Endothelial cell of umbilical vein (primary cell): ENCODE measurements at regions of chr5 and their contacts with region 1.

Region 1: DNA sequence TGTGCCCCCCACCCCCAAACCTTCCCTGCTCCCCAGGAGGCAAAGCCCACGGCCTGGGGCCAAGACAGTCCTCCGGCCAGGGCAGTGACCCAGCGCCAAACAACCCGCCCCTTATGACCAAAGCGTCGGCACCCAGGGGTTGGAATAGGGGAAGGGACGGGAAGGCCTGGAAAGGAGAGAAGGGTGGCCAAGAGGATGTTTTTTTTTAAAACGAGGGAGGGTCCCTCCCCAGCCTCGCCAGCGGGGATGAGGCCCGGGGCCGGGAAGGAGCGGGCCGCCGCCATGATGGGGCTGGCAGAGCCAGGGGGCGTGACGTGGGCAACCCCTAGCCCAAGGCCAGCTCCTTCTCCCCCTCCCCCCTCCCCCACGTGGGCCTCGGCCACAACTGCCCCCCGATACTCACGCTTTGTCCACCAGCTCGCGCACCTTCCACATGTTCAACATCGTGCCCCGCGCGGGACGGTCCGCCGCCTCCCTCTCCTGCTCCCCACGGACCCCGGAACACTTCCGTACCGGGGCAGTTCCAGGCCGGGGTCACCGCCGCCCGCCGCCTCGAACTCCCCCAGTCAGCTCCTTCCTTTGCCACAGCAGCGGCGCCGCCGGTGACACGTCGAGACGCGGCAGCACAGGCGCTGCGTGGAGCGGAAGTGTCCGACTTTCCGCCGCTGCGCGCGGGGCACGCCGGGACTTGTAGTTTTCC is at the start of gene CLINT1:
- DNase-seq: peak; percentile 86
- H3K4me3 ChIP-seq: peak within 1 kb of the TSS; percentile 68 to 95 (median 93)
- H3K27ac ChIP-seq: peak within 1 kb of the TSS; percentile 81
- H3K4me1 ChIP-seq: peaks cover 14% of the 10 kb centered on the region
- H3K27me3 ChIP-seq: no peaks in the 10 kb centered on the region
- CTCF ChIP-seq: no peak
- POLR2A ChIP-seq: peak; percentile 74
- total RNA-seq, gene CLINT1: 76.6 and 79.6 TPM in 2 replicates

Region 2: GRCh38 chr5:157820593-157821252 is 38.0 kb before region 1 on chr5:
- CTCF ChIA-PET with region 1: interaction called, 14 read pairs
- POLR2A ChIA-PET with region 1: no interaction called
- dilution Hi-C with region 1: no loop called
- intact Hi-C with region 1: loop called (anchors 1 kb)
- DNase-seq: peak; percentile 80
- H3K4me3 ChIP-seq: no peak overlapping the region
- H3K27ac ChIP-seq: no peak overlapping the region
- H3K4me1 ChIP-seq: peaks cover 14% of the 10 kb centered on the region
- H3K27me3 ChIP-seq: no peaks in the 10 kb centered on the region
- CTCF ChIP-seq: peak; percentile 36 to 39
- POLR2A ChIP-seq: no peak

Region 3: GRCh38 chr5:157845894-157846598 is 12.6 kb before region 1 on chr5:
- CTCF ChIA-PET with region 1: interaction called, 11 read pairs
- POLR2A ChIA-PET with region 1: interaction called, 4 read pairs
- dilution Hi-C with region 1: no loop called
- intact Hi-C with region 1: no loop called
- DNase-seq: no peak
- H3K4me3 ChIP-seq: no peak overlapping the region
- H3K27ac ChIP-seq: no peak overlapping the region
- H3K4me1 ChIP-seq: no peaks in the 10 kb centered on the region
- H3K27me3 ChIP-seq: no peaks in the 10 kb centered on the region
- CTCF ChIP-seq: no peak
- POLR2A ChIP-seq: no peak

Region 4: DNA sequence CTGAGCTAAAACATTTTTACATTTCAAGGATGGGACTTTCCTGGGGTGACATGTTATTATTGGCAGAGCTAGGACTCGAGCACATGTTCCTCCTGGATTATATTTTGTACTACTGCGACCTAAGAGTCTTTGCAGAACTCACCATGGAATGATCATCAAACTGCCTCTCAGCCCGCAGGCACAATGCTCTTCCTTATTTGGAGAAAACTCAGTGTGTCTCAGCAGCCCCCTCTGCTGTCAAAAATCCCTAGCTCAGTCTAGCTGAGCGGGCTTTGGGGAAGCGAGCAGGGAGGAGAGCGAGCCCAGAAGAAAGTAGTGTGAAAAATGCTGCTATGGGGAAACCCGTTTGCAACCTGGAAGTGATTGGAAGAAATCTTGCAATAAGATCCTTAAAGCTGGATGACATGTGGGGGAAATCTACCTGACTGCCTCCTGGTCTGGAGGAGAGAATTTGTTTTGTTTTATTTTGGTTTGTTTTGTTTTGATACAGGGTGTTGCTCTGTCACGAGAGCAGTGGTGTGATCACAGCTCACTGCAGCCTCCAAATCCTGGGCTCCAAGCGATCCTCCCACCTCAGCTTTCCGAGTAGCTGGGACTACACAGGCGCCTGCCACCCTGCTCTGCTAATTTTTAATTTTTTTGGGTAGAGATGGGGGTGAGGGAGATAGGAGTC is 90.2 kb after region 1 on chr5:
- CTCF ChIA-PET with region 1: interaction called, 60 read pairs
- POLR2A ChIA-PET with region 1: interaction called, 3 read pairs
- dilution Hi-C with region 1: no loop called
- intact Hi-C with region 1: loop called (anchors 1 kb)
- DNase-seq: peak; percentile 90
- H3K4me3 ChIP-seq: no peak overlapping the region
- H3K27ac ChIP-seq: no peak overlapping the region
- H3K4me1 ChIP-seq: no peaks in the 10 kb centered on the region
- H3K27me3 ChIP-seq: peaks cover 0 to 4% of the 10 kb centered on the region in 2 experiments
- CTCF ChIP-seq: peak; percentile 83 to 84
- POLR2A ChIP-seq: no peak

Region 5: DNA sequence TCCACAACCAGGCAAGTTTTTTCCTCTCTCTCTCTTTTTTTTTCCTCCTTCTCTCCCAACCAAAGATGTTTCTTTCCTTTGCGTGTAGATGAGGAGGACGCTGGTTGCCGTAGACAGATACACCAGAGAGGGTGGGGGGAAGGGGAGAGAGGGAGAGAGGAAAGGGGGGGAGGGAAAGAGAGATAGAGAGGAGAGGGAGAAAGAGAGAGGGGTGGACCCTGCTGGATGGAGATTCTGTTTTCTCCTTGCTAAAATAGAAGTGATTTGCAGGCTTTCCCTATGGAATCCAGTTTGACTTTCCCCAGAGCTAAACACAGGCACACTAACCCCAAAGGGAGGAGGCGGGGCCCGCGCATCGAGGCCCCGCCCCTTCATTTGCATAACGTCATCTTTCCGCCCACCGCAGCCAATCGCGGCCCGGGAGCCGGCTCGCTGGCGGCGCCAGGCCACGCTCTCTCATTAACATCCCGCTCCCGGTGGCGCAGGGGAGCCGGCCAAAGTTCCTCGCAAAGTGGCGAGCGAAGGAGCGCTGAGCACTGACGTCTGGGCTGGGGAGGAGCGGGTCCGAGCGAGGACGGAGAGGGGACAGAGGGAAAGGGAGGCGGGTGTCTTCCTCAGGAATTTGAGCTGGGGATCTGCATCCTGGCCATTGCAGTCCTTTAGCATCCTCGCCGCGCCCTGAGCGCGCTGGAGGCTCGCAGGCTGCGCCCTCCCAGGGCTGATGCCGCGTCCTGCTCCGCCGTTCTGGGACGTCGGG is 1241.5 kb after region 1 on chr5:
- CTCF ChIA-PET with region 1: no interaction called
- POLR2A ChIA-PET with region 1: no interaction called
- dilution Hi-C with region 1: no loop called
- intact Hi-C with region 1: loop called (anchors 1 kb)
- DNase-seq: peak; percentile 87
- H3K4me3 ChIP-seq: peak overlapping the region; percentile 26 to 67 (median 38)
- H3K27ac ChIP-seq: no peak overlapping the region
- H3K4me1 ChIP-seq: peaks cover 12% of the 10 kb centered on the region
- H3K27me3 ChIP-seq: peaks cover 65 to 70% of the 10 kb centered on the region in 2 experiments
- CTCF ChIP-seq: no peak
- POLR2A ChIP-seq: no peak